Activated naive CD4-positive, alpha-beta T cell treated with anti-CD3 and anti-CD28 coated beads for 36 hours (primary cell): ENCODE measurements at regions of chr5 and their contacts with region 1.

Region 1: GRCh38 chr5:131252824-131253171 is 11.1 kb upstream of the CDC42SE2 start:
- DNase-seq: peak; percentile 88
- H3K4me3 Mint-ChIP-seq: peak overlapping the region; percentile 94
- H3K27ac Mint-ChIP-seq: peak overlapping the region; percentile 95
- H3K4me1 Mint-ChIP-seq: peaks cover 72% of the 10 kb centered on the region
- H3K27me3 Mint-ChIP-seq: no peaks in the 10 kb centered on the region

Region 2: GRCh38 chr5:130966990-130967525 is 285.7 kb before region 1 on chr5:
- CTCF ChIA-PET with region 1: no interaction called
- intact Hi-C with region 1: no loop called
- DNase-seq: no peak
- H3K4me3 Mint-ChIP-seq: no peak overlapping the region
- H3K27ac Mint-ChIP-seq: no peak overlapping the region
- H3K4me1 Mint-ChIP-seq: no peaks in the 10 kb centered on the region
- H3K27me3 Mint-ChIP-seq: no peaks in the 10 kb centered on the region

Region 3: GRCh38 chr5:131068893-131069643 is 183.7 kb before region 1 on chr5:
- CTCF ChIA-PET with region 1: no interaction called
- intact Hi-C with region 1: loop called (anchors 5 kb)
- DNase-seq: peak; percentile 87
- H3K4me3 Mint-ChIP-seq: no peak overlapping the region
- H3K27ac Mint-ChIP-seq: peak overlapping the region; percentile 94
- H3K4me1 Mint-ChIP-seq: peaks cover 55% of the 10 kb centered on the region
- H3K27me3 Mint-ChIP-seq: no peaks in the 10 kb centered on the region

Region 4: DNA sequence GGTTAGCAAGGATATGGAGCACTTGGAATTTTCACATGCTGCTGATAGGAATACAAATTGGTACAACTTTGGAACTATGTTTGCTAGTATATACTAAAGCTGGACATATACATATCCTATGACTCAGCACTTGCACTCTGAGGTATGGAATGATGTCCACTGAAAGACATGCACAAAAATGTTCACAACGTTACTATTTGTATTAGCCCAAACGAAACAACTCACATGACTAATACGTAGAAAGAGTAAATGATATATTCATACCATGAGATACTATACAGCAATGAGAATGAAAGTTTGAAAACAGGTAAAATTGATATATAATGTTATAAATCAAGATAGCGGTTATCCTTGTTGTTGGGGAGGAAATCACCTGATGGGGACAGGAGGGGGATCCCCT is 34.4 kb before region 1 on chr5:
- CTCF ChIA-PET with region 1: interaction called, 5 read pairs
- intact Hi-C with region 1: loop called (anchors 2 kb)
- DNase-seq: no peak
- H3K4me3 Mint-ChIP-seq: no peak overlapping the region
- H3K27ac Mint-ChIP-seq: no peak overlapping the region
- H3K4me1 Mint-ChIP-seq: peaks cover 50% of the 10 kb centered on the region
- H3K27me3 Mint-ChIP-seq: no peaks in the 10 kb centered on the region

Region 5: GRCh38 chr5:131230406-131230805 is 22.4 kb before region 1 on chr5:
- CTCF ChIA-PET with region 1: no interaction called
- intact Hi-C with region 1: no loop called
- DNase-seq: no peak
- H3K4me3 Mint-ChIP-seq: no peak overlapping the region
- H3K27ac Mint-ChIP-seq: no peak overlapping the region
- H3K4me1 Mint-ChIP-seq: peaks cover 18% of the 10 kb centered on the region
- H3K27me3 Mint-ChIP-seq: no peaks in the 10 kb centered on the region

Region 6: GRCh38 chr5:131242728-131243255 is 10.0 kb before region 1 on chr5:
- CTCF ChIA-PET with region 1: no interaction called
- intact Hi-C with region 1: loop called (anchors 1 kb)
- DNase-seq: peak; percentile 38
- H3K4me3 Mint-ChIP-seq: no peak overlapping the region
- H3K27ac Mint-ChIP-seq: no peak overlapping the region
- H3K4me1 Mint-ChIP-seq: peaks cover 16% of the 10 kb centered on the region
- H3K27me3 Mint-ChIP-seq: no peaks in the 10 kb centered on the region

Region 7: DNA sequence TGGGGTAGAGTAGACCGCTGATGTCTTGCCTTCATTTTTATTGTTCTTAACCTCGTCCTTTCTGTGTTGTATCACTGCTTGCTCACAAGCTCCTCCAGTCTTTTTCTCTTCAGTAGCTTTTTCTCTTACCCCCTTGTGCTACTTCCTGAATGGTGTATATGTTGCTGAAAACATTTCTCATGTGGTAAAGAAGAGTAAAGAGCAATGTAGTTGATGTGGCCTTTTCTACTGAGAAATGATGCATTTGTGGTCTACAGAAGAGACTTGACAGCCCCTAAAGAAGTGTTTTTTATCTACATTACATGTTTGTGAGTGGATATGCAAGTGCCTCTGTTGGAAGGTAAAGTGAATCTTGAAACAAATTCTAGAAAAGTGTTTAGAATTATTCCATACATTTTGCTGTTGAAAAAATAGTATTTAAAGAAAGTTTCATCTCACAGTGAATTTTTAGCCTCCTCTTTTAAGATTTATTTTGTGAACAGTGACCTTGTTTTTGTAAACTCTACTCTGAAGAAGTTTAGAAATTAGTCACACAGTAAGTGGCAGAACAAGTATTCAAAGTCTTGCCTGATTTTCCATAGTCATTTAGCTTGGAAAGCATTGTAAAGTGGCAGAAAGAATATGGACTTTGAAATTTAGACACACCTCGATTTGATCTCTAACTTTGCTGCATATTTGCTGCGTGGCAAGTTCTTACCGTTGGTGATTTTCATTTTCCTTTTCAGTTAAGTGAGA is 28.5 kb after region 1 on chr5:
- CTCF ChIA-PET with region 1: no interaction called
- intact Hi-C with region 1: loop called (anchors 1 kb)
- DNase-seq: no peak
- H3K4me3 Mint-ChIP-seq: peak overlapping the region; percentile 66
- H3K27ac Mint-ChIP-seq: peak overlapping the region; percentile 93
- H3K4me1 Mint-ChIP-seq: peaks cover 92% of the 10 kb centered on the region
- H3K27me3 Mint-ChIP-seq: no peaks in the 10 kb centered on the region